H1 (cell line): ENCODE measurements at regions of chr12 and their contacts with region 1.

Region 1: DNA sequence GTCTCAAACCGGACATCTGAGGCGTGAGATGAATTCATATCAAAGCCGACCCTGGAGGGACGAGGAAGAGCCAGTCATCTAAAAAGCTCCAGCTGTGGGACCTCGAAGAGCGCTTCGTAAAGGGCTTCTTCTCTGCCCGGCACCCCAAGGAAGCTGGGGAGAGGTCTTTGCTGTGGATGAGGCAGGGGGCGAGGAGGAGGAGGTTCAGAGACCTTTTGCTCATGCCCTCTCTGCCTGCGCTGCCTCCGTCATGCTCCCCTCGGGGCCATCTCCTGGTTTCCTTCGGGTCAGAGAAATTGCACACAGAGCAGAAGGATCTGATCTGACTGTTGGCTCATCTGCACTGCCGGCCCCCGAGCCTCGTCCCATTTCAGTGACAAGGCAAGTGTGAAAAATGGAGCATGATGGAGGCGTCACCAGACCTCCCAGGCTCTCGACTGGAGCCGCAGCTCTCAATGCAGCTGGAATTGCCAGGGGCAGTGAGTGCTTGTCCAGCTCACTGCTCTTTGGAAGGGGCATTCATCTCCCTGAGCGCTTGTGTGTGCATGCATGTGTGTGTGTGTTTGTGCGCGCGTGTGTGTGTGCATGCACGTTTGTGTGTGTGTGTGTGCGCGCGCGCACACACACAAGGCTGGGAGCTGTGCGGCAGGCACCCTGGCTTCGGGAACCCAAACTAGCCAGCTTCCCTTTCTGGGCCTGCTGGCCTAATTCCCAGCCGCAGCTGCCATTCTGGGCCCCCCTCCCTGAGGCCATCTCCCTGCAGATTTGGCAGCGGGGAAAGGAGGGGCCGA is 9.2 kb downstream of the CABP1 start:
- DNase-seq: no peak
- H3K4me3 ChIP-seq: peak overlapping the region in 3 of 4 experiments; percentile 44 to 64 (median 63); a peak in 4 of 8 replicates
- H3K27ac ChIP-seq: no peak overlapping the region
- H3K4me1 ChIP-seq: peaks cover 4 to 7% (median 4%) of the 10 kb centered on the region in 4 experiments
- H3K27me3 ChIP-seq: no peaks in the 10 kb centered on the region
- CTCF ChIP-seq: no peak
- EP300 ChIP-seq: no peak
- POLR2A ChIP-seq: no peak
- RAD21 ChIP-seq: no peak

Region 2: DNA sequence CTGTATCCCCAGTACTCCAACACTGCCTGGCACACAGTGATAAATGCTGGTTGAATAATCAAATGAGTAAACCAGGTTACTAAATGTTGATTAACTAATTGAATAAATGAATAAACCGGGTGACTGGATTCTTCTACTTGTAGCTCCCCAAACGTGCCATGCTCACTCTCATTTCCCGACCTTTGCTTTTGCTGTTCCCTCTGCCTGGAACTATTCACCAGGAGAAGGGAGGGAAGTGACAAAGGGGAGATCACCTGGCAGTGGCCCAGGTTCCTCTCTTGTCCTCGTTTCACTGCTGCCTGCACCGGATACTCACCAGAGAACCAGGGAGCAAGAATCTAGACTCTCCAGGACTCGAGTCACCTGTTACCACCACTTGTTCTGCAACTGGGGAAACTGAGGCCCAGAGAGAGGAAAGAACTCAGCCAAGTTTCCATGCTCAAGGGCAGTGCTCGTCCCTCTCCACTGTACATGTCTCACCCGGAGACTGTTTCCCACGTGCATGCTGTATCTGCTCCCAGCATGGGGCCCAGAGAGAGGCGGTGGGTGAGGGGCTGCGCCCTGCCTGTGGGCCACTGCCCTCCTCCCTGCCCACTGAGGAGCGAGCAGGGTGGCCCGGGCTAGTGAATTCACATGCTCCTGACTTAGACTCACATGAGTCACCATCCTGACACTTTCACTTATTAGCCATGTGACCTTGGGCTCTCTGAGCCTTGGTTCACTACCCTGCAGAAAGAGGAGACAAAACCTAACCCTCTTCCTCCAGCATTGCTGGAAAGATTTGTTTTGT is 50.8 kb before region 1 on chr12:
- CTCF ChIA-PET with region 1: interaction called, 20 read pairs
- POLR2A ChIA-PET with region 1: no interaction called
- DNase-seq: no peak
- H3K4me3 ChIP-seq: no peak overlapping the region
- H3K27ac ChIP-seq: no peak overlapping the region
- H3K4me1 ChIP-seq: peaks cover 0 to 5% (median 2%) of the 10 kb centered on the region in 4 experiments; a peak in 6 of 7 replicates
- H3K27me3 ChIP-seq: no peaks in the 10 kb centered on the region
- CTCF ChIP-seq: no peak
- EP300 ChIP-seq: no peak
- POLR2A ChIP-seq: no peak
- RAD21 ChIP-seq: no peak

Region 3: GRCh38 chr12:120625557-120626419 is 23.8 kb before region 1 on chr12:
- CTCF ChIA-PET with region 1: interaction called, 70 read pairs
- POLR2A ChIA-PET with region 1: no interaction called
- DNase-seq: peak; percentile 51 to 76
- H3K4me3 ChIP-seq: no peak overlapping the region
- H3K27ac ChIP-seq: no peak overlapping the region
- H3K4me1 ChIP-seq: no peaks in the 10 kb centered on the region
- H3K27me3 ChIP-seq: no peaks in the 10 kb centered on the region
- CTCF ChIP-seq: peak; percentile 53 to 63 (median 58)
- EP300 ChIP-seq: no peak
- POLR2A ChIP-seq: no peak
- RAD21 ChIP-seq: peak; percentile 62 to 67

Region 4: DNA sequence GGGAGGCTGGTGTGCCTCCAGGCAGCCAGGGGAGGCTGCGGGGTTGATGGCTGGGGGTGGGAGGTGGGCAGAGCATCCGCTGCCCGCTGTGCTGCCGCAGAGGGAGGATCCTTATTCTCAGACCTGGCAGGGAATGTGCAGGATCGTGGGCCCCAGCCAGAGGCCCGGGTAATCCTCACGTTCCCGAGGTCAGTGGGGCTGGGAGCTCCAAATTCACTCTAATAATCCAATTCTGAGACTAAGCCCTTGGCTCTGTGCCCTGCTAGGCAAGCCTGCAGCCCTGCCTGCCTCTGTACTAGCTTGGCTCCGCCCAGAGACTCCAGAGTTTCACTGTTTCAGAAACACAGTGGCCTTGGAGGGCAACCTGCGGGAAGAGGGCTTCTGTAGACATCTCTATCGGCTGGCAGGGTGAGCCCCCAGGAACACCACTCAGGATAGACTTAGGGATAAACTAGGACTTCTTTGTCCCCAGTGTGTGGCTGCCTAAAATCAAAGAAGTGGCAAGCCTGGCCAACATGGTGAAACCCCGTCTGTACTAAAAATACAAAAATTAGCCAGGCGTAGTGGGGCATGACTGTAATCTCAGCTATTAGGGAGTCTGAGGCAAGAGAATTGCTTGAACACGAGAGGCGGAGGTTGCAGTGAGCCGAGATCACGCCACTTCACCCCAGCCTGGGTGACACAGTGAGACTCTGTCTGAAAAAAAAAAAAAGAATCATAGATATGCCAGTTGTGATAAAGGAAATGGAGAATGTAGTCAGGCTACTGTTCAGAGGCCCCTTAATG is 19.6 kb after region 1 on chr12:
- CTCF ChIA-PET with region 1: interaction called, 83 read pairs
- POLR2A ChIA-PET with region 1: interaction called, 4 read pairs
- DNase-seq: peak in 1 of 2 experiments; percentile 66
- H3K4me3 ChIP-seq: peak overlapping the region in 3 of 4 experiments; percentile 1 to 33 (median 14); a peak in 3 of 8 replicates
- H3K27ac ChIP-seq: no peak overlapping the region
- H3K4me1 ChIP-seq: peaks cover 7 to 19% (median 12%) of the 10 kb centered on the region in 4 experiments
- H3K27me3 ChIP-seq: no peaks in the 10 kb centered on the region
- CTCF ChIP-seq: peak in 1 of 3 experiments; percentile 1; a peak in 1 of 4 replicates
- EP300 ChIP-seq: no peak
- POLR2A ChIP-seq: no peak
- RAD21 ChIP-seq: no peak

Region 5: GRCh38 chr12:120686690-120687577 is 37.3 kb after region 1 on chr12 and contains the start of gene MLEC:
- CTCF ChIA-PET with region 1: interaction called, 87 read pairs
- POLR2A ChIA-PET with region 1: interaction called, 3 read pairs
- DNase-seq: peak; percentile 77 to 98
- H3K4me3 ChIP-seq: peak within 1 kb of the TSS; percentile 74 to 93 (median 90)
- H3K27ac ChIP-seq: peak within 1 kb of the TSS; percentile 87
- H3K4me1 ChIP-seq: peaks cover 2 to 15% (median 4%) of the 10 kb centered on the region in 4 experiments; a peak in 5 of 7 replicates
- H3K27me3 ChIP-seq: no peaks in the 10 kb centered on the region
- CTCF ChIP-seq: peak in 2 of 3 experiments; percentile 23; a peak in 2 of 4 replicates
- EP300 ChIP-seq: no peak
- POLR2A ChIP-seq: peak; percentile 11 to 55; a peak in 1 of 3 replicates
- RAD21 ChIP-seq: peak; percentile 45 to 55; a peak in 3 of 4 replicates
- total RNA-seq, gene MLEC: 260 and 266 TPM in 2 replicates

Region 6: GRCh38 chr12:120710031-120710804 is 60.6 kb after region 1 on chr12 and contains the start of gene UNC119B:
- CTCF ChIA-PET with region 1: interaction called, 56 read pairs
- POLR2A ChIA-PET with region 1: interaction called, 13 read pairs
- DNase-seq: peak in 1 of 2 experiments; percentile 82
- H3K4me3 ChIP-seq: peak within 1 kb of the TSS; percentile 72 to 95 (median 87)
- H3K27ac ChIP-seq: peak within 1 kb of the TSS; percentile 82
- H3K4me1 ChIP-seq: peaks cover 5 to 13% (median 9%) of the 10 kb centered on the region in 4 experiments; a peak in 6 of 7 replicates
- H3K27me3 ChIP-seq: no peaks in the 10 kb centered on the region
- CTCF ChIP-seq: no peak
- EP300 ChIP-seq: no peak
- POLR2A ChIP-seq: peak in 1 of 2 experiments; percentile 66; a peak in 1 of 3 replicates
- RAD21 ChIP-seq: no peak
- total RNA-seq, gene UNC119B: 50.1 and 51.9 TPM in 2 replicates